ENCODE measurements at regions of chr7 and their contacts with region 1.

Region 1: GRCh38 chr7:129635300-129636029 is 23.9 kb downstream of the NRF1 start:
- DNase-seq: peak; percentile 41 to 82 (median 70)
- ATAC-seq: peak; percentile 98
- H3K4me3 ChIP-seq: no peak overlapping the region
- H3K4me3 Mint-ChIP-seq: no peak overlapping the region
- H3K27ac ChIP-seq: no peak overlapping the region
- H3K27ac Mint-ChIP-seq: peak overlapping the region; percentile 8
- H3K4me1 ChIP-seq: peaks cover 10% of the 10 kb centered on the region
- H3K4me1 Mint-ChIP-seq: peaks cover 56% of the 10 kb centered on the region
- H3K27me3 ChIP-seq: no peaks in the 10 kb centered on the region
- H3K27me3 Mint-ChIP-seq: no peaks in the 10 kb centered on the region
- CTCF ChIP-seq: peak; percentile 79

Region 2: GRCh38 chr7:129258649-129259389 is 376.6 kb before region 1 on chr7:
- CTCF ChIA-PET with region 1: no interaction called
- POLR2A ChIA-PET with region 1: no interaction called
- intact Hi-C with region 1: no loop called
- DNase-seq: peak in 1 of 9 experiments; percentile 19
- ATAC-seq: no peak
- H3K4me3 ChIP-seq: no peak overlapping the region
- H3K4me3 Mint-ChIP-seq: peak overlapping the region; percentile 70
- H3K27ac ChIP-seq: no peak overlapping the region
- H3K27ac Mint-ChIP-seq: no peak overlapping the region
- H3K4me1 ChIP-seq: peaks cover 10% of the 10 kb centered on the region
- H3K4me1 Mint-ChIP-seq: peaks cover 33% of the 10 kb centered on the region
- H3K27me3 ChIP-seq: no peaks in the 10 kb centered on the region
- H3K27me3 Mint-ChIP-seq: no peaks in the 10 kb centered on the region
- CTCF ChIP-seq: no peak

Region 3: GRCh38 chr7:129468087-129468486 is 167.4 kb before region 1 on chr7:
- CTCF ChIA-PET with region 1: interaction called, 6 read pairs
- POLR2A ChIA-PET with region 1: no interaction called
- intact Hi-C with region 1: loop called in 1 of 2 experiments (anchors 1 kb)
- DNase-seq: no peak
- ATAC-seq: no peak
- H3K4me3 ChIP-seq: no peak overlapping the region
- H3K4me3 Mint-ChIP-seq: no peak overlapping the region
- H3K27ac ChIP-seq: no peak overlapping the region
- H3K27ac Mint-ChIP-seq: no peak overlapping the region
- H3K4me1 ChIP-seq: no peaks in the 10 kb centered on the region
- H3K4me1 Mint-ChIP-seq: peaks cover 2% of the 10 kb centered on the region
- H3K27me3 ChIP-seq: no peaks in the 10 kb centered on the region
- H3K27me3 Mint-ChIP-seq: no peaks in the 10 kb centered on the region
- CTCF ChIP-seq: no peak

Region 4: GRCh38 chr7:129604713-129605437 is 30.6 kb before region 1 on chr7:
- CTCF ChIA-PET with region 1: interaction called, 6 read pairs
- POLR2A ChIA-PET with region 1: no interaction called
- intact Hi-C with region 1: loop called in 1 of 2 experiments (anchors 5 kb)
- DNase-seq: no peak
- ATAC-seq: no peak
- H3K4me3 ChIP-seq: no peak overlapping the region
- H3K4me3 Mint-ChIP-seq: no peak overlapping the region
- H3K27ac ChIP-seq: no peak overlapping the region
- H3K27ac Mint-ChIP-seq: no peak overlapping the region
- H3K4me1 ChIP-seq: peaks cover 2% of the 10 kb centered on the region
- H3K4me1 Mint-ChIP-seq: peaks cover 28% of the 10 kb centered on the region
- H3K27me3 ChIP-seq: no peaks in the 10 kb centered on the region
- H3K27me3 Mint-ChIP-seq: no peaks in the 10 kb centered on the region
- CTCF ChIP-seq: no peak

Region 5: DNA sequence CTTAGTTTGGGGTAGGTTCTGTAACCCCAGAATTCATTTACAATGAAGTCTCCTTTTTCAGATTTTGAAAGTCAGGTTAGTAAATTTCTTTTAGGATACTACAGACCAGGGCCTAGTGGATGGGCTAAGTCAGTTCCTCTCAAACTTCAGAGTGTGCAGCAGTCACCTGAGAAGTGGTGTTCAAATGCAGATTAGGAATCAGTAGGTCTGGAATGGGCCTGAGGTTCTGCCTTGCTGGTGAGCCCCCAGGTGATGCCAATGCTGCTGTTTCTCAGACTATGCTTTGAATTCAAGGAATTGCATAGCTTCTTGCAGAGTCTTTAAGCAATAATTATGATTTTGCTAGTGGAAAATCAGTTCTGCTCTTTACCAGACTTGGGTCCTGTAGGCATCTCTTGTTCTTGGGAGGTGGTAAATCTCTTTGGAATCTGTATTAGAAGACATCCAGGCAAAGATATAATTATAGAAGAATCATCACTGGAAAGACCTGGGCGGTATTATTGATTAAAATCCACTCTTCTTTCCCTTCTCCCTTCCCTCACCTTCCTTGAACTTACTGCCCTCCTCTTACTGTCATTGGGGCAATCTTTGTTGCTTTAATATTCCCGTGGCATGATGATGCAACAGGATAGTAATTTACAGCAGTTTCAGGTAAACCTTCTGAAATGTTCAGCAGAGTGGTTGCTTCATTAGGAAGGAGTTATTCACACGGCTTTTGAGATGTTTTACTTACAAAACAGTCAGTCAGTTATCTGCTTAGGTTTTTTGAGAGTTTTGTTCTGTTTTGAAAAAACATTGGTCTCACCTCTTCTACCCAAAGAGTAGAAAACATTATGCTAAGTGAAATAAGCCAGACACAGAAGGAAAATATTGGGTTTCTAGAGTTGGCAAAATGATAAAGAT is 63.3 kb after region 1 on chr7:
- CTCF ChIA-PET with region 1: no interaction called
- POLR2A ChIA-PET with region 1: no interaction called
- intact Hi-C with region 1: no loop called
- DNase-seq: no peak
- ATAC-seq: no peak
- H3K4me3 ChIP-seq: no peak overlapping the region
- H3K4me3 Mint-ChIP-seq: no peak overlapping the region
- H3K27ac ChIP-seq: no peak overlapping the region
- H3K27ac Mint-ChIP-seq: no peak overlapping the region
- H3K4me1 ChIP-seq: no peaks in the 10 kb centered on the region
- H3K4me1 Mint-ChIP-seq: peaks cover 4% of the 10 kb centered on the region
- H3K27me3 ChIP-seq: no peaks in the 10 kb centered on the region
- H3K27me3 Mint-ChIP-seq: no peaks in the 10 kb centered on the region
- CTCF ChIP-seq: no peak